Endothelial cell of umbilical vein (primary cell): ENCODE measurements at regions of chr12 and their contacts with region 1.

Region 1: GRCh38 chr12:19439059-19440018 is at the start of gene AEBP2:
- DNase-seq: peak; percentile 94
- H3K4me3 ChIP-seq: peak within 1 kb of the TSS; percentile 90 to 97 (median 97)
- H3K27ac ChIP-seq: peak within 1 kb of the TSS; percentile 74
- H3K4me1 ChIP-seq: peaks cover 13% of the 10 kb centered on the region
- H3K27me3 ChIP-seq: peaks cover 0 to 6% of the 10 kb centered on the region in 2 experiments
- CTCF ChIP-seq: no peak
- POLR2A ChIP-seq: peak; percentile 12
- total RNA-seq, gene AEBP2: 42.2 and 45.1 TPM in 2 replicates

Region 2: GRCh38 chr12:19643635-19644034 is 204.3 kb after region 1 on chr12:
- CTCF ChIA-PET with region 1: no interaction called
- POLR2A ChIA-PET with region 1: no interaction called
- dilution Hi-C with region 1: no loop called
- intact Hi-C with region 1: loop called (anchors 5 kb)
- DNase-seq: peak; percentile 83
- H3K4me3 ChIP-seq: no peak overlapping the region
- H3K27ac ChIP-seq: no peak overlapping the region
- H3K4me1 ChIP-seq: no peaks in the 10 kb centered on the region
- H3K27me3 ChIP-seq: no peaks in the 10 kb centered on the region
- CTCF ChIP-seq: peak; percentile 47 to 64
- POLR2A ChIP-seq: no peak

Region 3: DNA sequence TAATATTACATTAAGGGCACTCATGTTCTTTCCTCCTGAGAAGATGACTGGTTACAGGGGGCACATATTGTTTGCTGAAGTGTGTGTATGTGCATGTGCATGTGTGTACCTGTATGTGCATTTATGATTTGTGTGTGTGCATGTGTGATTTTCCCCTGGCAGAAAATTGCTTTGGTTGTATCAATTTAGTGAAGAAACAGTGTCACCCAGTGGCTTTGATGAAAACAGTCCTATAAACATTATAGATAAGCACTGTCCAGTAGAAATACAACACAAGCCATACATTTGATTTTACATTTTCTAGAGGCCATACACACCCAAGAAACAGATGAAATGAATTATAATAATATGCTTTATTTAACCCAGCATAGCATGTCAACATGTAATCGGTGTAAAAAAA is 937.6 kb after region 1 on chr12:
- CTCF ChIA-PET with region 1: no interaction called
- POLR2A ChIA-PET with region 1: no interaction called
- dilution Hi-C with region 1: no loop called
- intact Hi-C with region 1: loop called (anchors 5 kb)
- DNase-seq: peak; percentile 60
- H3K4me3 ChIP-seq: no peak overlapping the region
- H3K27ac ChIP-seq: no peak overlapping the region
- H3K4me1 ChIP-seq: peaks cover 37% of the 10 kb centered on the region
- H3K27me3 ChIP-seq: no peaks in the 10 kb centered on the region
- CTCF ChIP-seq: peak; percentile 22 to 35
- POLR2A ChIP-seq: no peak